Activated naive CD4-positive, alpha-beta T cell treated with anti-CD3 and anti-CD28 coated beads, Interleukin-2, amount 10 ng/mL, durations not matched to agents 7 days and 5 days (primary cell): ENCODE measurements at regions of chr6 and their contacts with region 1.

Region 1: GRCh38 chr6:130872250-130873095 is 45.3 kb downstream of the SMLR1 start:
- DNase-seq: peak; percentile 81
- H3K4me3 Mint-ChIP-seq: no peak overlapping the region
- H3K27ac Mint-ChIP-seq: no peak overlapping the region
- H3K4me1 Mint-ChIP-seq: peaks cover 3% of the 10 kb centered on the region
- H3K27me3 Mint-ChIP-seq: peaks cover 4% of the 10 kb centered on the region

Region 2: GRCh38 chr6:129923530-129924250 is 948.8 kb before region 1 on chr6:
- CTCF ChIA-PET with region 1: no interaction called
- DNase-seq: no peak
- H3K4me3 Mint-ChIP-seq: no peak overlapping the region
- H3K27ac Mint-ChIP-seq: no peak overlapping the region
- H3K4me1 Mint-ChIP-seq: no peaks in the 10 kb centered on the region
- H3K27me3 Mint-ChIP-seq: peaks cover 4% of the 10 kb centered on the region

Region 3: DNA sequence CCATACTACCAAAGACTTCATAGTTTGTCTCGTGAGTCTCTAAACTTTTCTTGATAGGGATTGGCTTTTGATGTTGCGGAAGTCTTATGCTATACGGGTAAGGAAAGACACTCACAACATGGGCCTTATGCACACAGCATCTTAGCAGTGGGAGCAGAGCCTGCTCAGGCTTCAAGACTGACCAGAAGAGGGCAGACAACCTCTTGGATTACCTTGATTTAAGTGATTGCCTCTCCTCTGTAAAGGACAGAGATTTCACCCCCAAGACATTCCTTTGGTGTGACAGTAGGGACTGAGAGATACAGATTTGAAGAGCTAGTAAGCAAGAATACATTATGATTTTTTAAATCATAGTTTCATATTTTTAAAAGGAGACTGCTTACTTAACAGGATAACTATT is 578.7 kb before region 1 on chr6:
- CTCF ChIA-PET with region 1: interaction called, 10 read pairs
- DNase-seq: peak; percentile 60
- H3K4me3 Mint-ChIP-seq: no peak overlapping the region
- H3K27ac Mint-ChIP-seq: no peak overlapping the region
- H3K4me1 Mint-ChIP-seq: peaks cover 2% of the 10 kb centered on the region
- H3K27me3 Mint-ChIP-seq: peaks cover 4% of the 10 kb centered on the region

Region 4: GRCh38 chr6:130322673-130323268 is 549.7 kb before region 1 on chr6:
- CTCF ChIA-PET with region 1: interaction called, 10 read pairs
- DNase-seq: peak; percentile 68
- H3K4me3 Mint-ChIP-seq: no peak overlapping the region
- H3K27ac Mint-ChIP-seq: no peak overlapping the region
- H3K4me1 Mint-ChIP-seq: peaks cover 10% of the 10 kb centered on the region
- H3K27me3 Mint-ChIP-seq: peaks cover 14% of the 10 kb centered on the region

Region 5: GRCh38 chr6:130981409-130981808 is 108.9 kb after region 1 on chr6:
- CTCF ChIA-PET with region 1: no interaction called
- DNase-seq: no peak
- H3K4me3 Mint-ChIP-seq: no peak overlapping the region
- H3K27ac Mint-ChIP-seq: no peak overlapping the region
- H3K4me1 Mint-ChIP-seq: no peaks in the 10 kb centered on the region
- H3K27me3 Mint-ChIP-seq: no peaks in the 10 kb centered on the region

Region 6: GRCh38 chr6:131379948-131380347 is 507.5 kb after region 1 on chr6:
- CTCF ChIA-PET with region 1: no interaction called
- DNase-seq: no peak
- H3K4me3 Mint-ChIP-seq: no peak overlapping the region
- H3K27ac Mint-ChIP-seq: no peak overlapping the region
- H3K4me1 Mint-ChIP-seq: no peaks in the 10 kb centered on the region
- H3K27me3 Mint-ChIP-seq: no peaks in the 10 kb centered on the region